Activated CD8-positive, alpha-beta T cell treated with anti-CD3 and anti-CD28 coated beads, Interleukin-2, amount 10 ng/mL, durations not matched to agents 7 days and 5 days (primary cell): ENCODE measurements at regions of chr1 and their contacts with region 1.

Region 1: DNA sequence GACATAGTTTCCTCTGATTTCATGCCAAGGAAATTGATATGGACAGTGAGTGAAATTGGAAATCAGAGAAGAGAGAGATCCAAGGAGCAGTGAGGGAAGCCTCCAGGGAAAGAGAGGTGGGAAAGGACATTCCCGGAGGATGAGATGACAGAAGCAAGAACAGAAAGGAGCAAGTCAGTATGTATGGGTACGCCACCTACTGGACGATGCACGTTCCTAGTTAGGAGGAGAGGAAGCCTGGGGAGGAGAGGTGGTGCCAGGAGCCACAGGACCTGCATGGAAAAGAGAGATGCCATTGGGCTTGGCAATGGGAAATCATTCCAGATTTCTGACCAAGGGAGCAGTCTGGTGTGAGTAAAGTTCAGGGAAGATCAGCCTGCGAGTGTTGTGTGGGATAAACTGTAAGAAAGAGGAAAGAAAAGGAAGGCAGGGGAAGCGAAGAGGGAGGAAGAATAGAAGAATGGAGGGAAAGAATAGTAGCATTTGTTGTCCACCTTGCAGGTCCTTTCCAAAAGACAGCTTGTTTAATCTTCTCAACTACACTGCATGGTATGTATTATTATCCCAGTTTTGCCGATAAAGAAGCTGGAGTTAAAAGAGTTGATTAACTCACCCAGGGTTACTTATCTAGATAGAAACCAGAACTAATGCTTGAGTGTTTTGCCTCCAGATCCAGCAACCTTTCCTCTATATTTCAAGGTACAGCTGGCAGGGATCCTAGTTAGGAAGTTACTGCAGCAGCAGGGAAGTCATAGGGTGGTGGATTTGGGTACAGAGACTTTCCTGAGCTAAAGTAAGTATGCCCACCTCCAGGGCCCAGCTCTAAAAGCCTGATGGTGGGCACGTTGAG is 27.4 kb downstream of the C1orf116 start:
- DNase-seq: peak; percentile 60
- ATAC-seq: peak; percentile 74
- H3K4me3 Mint-ChIP-seq: no peak overlapping the region
- H3K27ac Mint-ChIP-seq: no peak overlapping the region
- H3K4me1 Mint-ChIP-seq: no peaks in the 10 kb centered on the region
- H3K27me3 Mint-ChIP-seq: peaks cover 33% of the 10 kb centered on the region

Region 2: GRCh38 chr1:206974140-206974539 is 31.1 kb before region 1 on chr1:
- CTCF ChIA-PET with region 1: interaction called, 16 read pairs
- POLR2A ChIA-PET with region 1: no interaction called
- DNase-seq: no peak
- ATAC-seq: no peak
- H3K4me3 Mint-ChIP-seq: no peak overlapping the region
- H3K27ac Mint-ChIP-seq: no peak overlapping the region
- H3K4me1 Mint-ChIP-seq: no peaks in the 10 kb centered on the region
- H3K27me3 Mint-ChIP-seq: peaks cover 45% of the 10 kb centered on the region

Region 3: DNA sequence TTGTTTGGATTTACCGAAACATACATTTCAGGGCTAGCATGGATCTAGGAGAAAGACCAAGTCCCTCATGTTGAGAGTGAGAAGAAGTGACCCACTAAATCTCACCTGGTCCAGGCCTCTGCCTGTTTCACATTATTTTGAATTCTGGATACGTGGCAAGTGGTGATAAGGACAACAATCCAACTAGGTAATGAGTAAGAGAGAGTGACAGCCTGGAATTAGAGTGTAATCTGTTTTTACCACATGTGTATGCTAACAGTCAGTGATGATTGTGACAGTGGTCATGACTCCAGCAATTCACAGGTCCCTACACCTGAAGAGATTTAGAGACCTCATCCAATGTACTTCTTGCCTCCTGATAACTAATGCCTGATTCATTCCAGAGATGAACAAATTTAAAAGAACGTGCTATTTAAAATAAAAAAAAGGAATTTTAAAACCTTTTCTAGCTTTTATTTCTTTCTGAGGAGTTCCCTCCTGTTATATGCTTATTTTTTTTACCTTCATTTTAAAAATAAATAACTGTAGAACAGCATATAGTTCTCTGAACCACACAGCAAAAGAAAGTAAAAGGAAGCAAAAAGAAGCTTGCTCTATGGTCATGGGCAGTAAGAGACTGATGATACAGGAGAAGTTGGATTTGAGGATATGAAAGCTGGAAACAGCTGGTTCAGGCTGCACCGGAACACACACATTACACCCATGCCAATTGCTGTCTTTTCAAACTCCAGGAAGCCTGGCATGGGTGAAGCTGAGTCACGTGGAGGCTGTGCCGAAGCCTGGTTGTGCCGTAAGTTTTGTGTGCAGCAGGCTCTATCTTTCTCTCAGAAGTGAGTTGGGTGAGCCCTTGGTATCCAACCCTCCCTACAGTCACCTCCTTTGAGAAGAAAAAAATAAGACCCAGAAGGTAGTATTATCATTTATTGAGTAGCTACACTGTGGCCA is 12.7 kb after region 1 on chr1:
- CTCF ChIA-PET with region 1: interaction called, 33 read pairs
- POLR2A ChIA-PET with region 1: interaction called, 3 read pairs
- DNase-seq: no peak
- ATAC-seq: no peak
- H3K4me3 Mint-ChIP-seq: no peak overlapping the region
- H3K27ac Mint-ChIP-seq: no peak overlapping the region
- H3K4me1 Mint-ChIP-seq: no peaks in the 10 kb centered on the region
- H3K27me3 Mint-ChIP-seq: peaks cover 25% of the 10 kb centered on the region

Region 4: DNA sequence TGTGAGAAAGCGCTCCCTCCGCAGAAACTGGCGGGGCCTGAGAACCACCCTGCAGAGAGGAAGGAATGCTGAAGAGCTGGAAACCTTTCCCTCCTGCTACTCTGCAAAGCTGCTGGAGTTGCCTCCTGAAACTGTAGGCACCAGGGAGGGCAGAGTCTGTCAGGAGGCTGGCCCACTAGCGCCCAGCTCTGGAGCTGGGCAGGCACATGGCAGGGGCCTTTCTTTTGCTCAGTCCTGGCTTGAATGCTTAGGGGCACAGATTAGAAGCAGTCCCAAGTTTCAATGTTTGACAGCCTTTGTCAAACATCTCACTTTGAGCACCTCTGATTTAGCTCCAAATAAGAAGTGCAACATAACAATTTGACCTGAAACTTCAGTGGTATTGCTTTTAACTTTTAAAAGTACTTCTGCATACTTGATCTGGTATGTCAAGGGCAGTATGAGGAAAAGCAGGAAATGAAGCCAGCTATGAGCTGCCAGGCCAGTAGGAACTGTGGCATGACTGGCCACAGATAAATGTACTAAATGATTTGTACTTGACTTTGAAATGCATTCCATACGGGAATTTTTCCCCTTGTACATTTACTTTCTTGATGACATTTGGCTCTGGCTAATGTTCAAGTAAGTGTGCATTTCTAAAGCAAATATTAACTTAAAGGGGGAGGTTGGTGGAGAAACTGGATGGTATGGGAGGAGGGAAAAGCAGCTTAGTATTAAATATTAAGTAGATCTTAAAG is 20.1 kb after region 1 on chr1:
- CTCF ChIA-PET with region 1: interaction called, 33 read pairs
- POLR2A ChIA-PET with region 1: no interaction called
- DNase-seq: no peak
- ATAC-seq: no peak
- H3K4me3 Mint-ChIP-seq: no peak overlapping the region
- H3K27ac Mint-ChIP-seq: no peak overlapping the region
- H3K4me1 Mint-ChIP-seq: peaks cover 6% of the 10 kb centered on the region
- H3K27me3 Mint-ChIP-seq: peaks cover 35% of the 10 kb centered on the region

Region 5: DNA sequence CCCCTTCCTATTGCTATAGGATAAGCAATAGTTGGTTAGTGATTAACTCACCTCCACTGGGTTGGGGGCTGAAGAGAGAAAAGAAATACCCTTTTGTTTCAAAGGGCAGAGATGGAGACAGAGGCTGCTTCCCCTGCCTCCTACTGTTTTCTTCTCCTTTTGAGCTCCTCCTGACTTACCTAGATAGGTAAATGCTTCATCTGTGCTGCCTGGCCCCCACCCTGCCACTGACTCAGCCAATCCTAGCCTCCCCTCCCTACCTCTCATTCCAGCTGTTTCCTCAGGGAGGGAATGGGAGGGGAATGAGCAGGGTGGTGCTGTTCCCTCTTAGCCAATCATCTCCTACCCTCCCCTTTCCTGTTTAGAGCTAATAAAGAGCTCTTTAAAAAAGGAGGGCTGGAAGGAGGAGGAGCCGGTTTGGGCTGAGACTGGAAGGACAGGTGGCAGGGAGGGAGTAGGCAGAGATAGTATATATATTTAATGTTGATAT is 27.4 kb after region 1 on chr1 and contains the start of gene C1orf116:
- CTCF ChIA-PET with region 1: interaction called, 18 read pairs
- POLR2A ChIA-PET with region 1: no interaction called
- DNase-seq: no peak
- ATAC-seq: no peak
- H3K4me3 Mint-ChIP-seq: no peak within 1 kb of the TSS
- H3K27ac Mint-ChIP-seq: no peak within 1 kb of the TSS
- H3K4me1 Mint-ChIP-seq: no peaks in the 10 kb centered on the region
- H3K27me3 Mint-ChIP-seq: peaks cover 43% of the 10 kb centered on the region
- total RNA-seq, gene C1orf116: not detected